Left ventricle myocardium inferior (tissue), 1 donor: ENCODE measurements at regions of chr1 and their contacts with region 1.

Region 1: GRCh38 chr1:6246497-6247295 is 2.7 kb downstream of the HES3 start:
- DNase-seq: peak; percentile 76
- H3K4me3 ChIP-seq: no peak overlapping the region
- H3K27ac ChIP-seq: no peak overlapping the region
- H3K4me1 ChIP-seq: peaks cover 36% of the 10 kb centered on the region
- H3K27me3 ChIP-seq: peaks cover 96% of the 10 kb centered on the region
- CTCF ChIP-seq: peak; percentile 95

Region 2: GRCh38 chr1:5961601-5962000 is 285.1 kb before region 1 on chr1:
- intact Hi-C with region 1: no loop called
- DNase-seq: no peak
- H3K4me3 ChIP-seq: no peak overlapping the region
- H3K27ac ChIP-seq: no peak overlapping the region
- H3K4me1 ChIP-seq: no peaks in the 10 kb centered on the region
- H3K27me3 ChIP-seq: no peaks in the 10 kb centered on the region
- CTCF ChIP-seq: no peak

Region 3: DNA sequence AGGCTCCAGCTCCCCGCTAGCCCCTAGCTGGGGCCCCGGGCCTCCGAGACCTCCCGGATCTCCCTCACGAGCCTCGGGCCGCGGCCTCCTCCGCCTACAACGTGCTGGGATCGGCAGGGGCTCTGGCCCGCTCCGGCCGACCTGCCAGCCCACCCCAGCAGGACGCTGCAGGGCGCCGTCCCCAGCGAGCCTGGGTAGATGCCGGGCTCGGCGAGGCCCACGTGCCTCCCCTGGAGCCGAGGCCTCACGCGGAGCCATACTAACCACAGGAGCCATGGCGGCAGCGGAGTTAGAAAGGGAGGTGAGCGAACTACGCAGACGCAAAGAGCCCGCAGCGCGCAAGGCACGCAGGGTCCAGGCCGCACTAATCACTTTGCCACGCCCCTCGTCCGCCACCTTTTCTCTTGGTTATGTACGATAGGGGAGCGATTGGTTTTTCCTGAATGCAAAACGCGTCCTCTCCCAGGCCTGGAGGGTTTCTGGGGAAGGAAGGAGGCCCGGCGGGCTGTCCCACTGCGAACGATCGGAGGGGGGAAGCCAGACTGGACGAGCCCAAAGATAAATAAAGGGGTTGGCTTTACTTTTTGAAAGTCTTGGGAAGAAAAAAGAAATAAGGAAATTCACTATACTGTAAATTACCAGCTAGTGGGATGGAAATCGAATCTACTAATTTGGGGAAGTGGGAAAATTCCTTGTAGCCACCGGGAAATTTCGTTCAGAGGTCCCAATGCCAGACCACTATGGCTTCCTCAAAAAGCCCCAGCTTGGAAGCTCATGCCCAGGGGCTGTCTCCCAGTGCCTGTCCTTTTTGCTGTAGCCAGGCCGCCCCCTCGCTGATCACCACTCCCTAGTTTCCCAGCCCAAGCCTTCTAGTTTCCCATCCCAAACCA is 47.2 kb before region 1 on chr1 and contains the start of gene RPL22:
- intact Hi-C with region 1: no loop called
- DNase-seq: peak; percentile 99
- H3K4me3 ChIP-seq: peak within 1 kb of the TSS; percentile 79
- H3K27ac ChIP-seq: peak within 1 kb of the TSS; percentile 93
- H3K4me1 ChIP-seq: peaks cover 45% of the 10 kb centered on the region
- H3K27me3 ChIP-seq: no peaks in the 10 kb centered on the region
- CTCF ChIP-seq: no peak
- total RNA-seq, gene RPL22: 250 TPM

Region 4: DNA sequence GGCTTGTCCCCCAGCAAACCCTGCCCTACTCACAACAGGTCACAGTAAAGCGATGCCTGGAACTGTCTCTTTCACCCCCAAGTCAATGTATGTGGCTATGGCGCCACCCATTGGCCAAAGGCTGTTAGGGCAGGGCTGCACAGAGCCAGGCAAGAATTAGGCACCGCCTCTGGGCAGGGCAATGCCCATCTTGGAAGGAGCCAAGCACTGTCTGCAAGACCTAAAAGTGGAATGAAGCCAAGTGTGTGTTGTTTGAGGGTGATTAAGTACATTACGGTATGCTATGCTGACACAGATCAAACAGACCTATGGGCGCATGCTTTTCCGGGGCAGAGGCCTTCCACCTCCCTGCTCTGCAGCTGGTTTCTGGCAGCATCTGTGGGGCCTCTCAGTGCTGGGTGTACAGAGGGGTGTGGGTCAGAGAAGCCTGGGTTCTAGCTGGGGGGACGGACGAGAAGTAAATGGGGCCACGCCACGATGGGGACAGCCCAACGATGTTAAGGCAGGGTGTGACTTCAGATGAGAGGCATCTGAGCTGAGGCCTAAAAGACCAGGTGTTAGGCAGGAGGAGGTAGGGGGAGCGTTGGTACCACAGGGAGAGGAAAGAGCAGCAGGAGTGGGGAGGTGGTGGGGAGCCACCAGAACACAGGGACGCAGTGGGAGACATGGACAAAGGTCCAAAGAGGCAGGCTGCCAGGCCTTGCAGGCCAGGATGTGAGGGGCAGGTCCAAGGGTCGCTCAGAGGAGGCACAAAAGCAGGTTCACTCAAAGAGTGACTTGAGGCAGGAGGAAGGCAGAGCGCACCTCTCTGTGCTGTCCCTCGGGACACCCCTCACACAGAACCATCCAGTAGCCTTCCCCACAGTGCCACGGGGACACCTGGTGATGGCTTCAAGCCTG is 97.1 kb after region 1 on chr1:
- intact Hi-C with region 1: loop called (anchors 2 kb)
- DNase-seq: peak; percentile 62
- H3K4me3 ChIP-seq: no peak overlapping the region
- H3K27ac ChIP-seq: no peak overlapping the region
- H3K4me1 ChIP-seq: peaks cover 11% of the 10 kb centered on the region
- H3K27me3 ChIP-seq: no peaks in the 10 kb centered on the region
- CTCF ChIP-seq: peak; percentile 86

Region 5: GRCh38 chr1:6367381-6368012 is 120.8 kb after region 1 on chr1:
- intact Hi-C with region 1: no loop called
- DNase-seq: peak; percentile 48
- H3K4me3 ChIP-seq: no peak overlapping the region
- H3K27ac ChIP-seq: no peak overlapping the region
- H3K4me1 ChIP-seq: peaks cover 15% of the 10 kb centered on the region
- H3K27me3 ChIP-seq: no peaks in the 10 kb centered on the region
- CTCF ChIP-seq: no peak

Region 6: GRCh38 chr1:6727535-6727934 is 480.8 kb after region 1 on chr1:
- intact Hi-C with region 1: no loop called
- DNase-seq: peak; percentile 35
- H3K4me3 ChIP-seq: no peak overlapping the region
- H3K27ac ChIP-seq: no peak overlapping the region
- H3K4me1 ChIP-seq: peaks cover 9% of the 10 kb centered on the region
- H3K27me3 ChIP-seq: no peaks in the 10 kb centered on the region
- CTCF ChIP-seq: peak; percentile 85